ENCODE measurements at regions of chr18 and their contacts with region 1.

Region 1: GRCh38 chr18:76398896-76399612 is 96.0 kb downstream of the ZNF516 start:
- H3K4me3 Mint-ChIP-seq: no peak overlapping the region
- H3K27ac Mint-ChIP-seq: no peak overlapping the region
- H3K4me1 Mint-ChIP-seq: peaks cover 72% of the 10 kb centered on the region
- H3K27me3 Mint-ChIP-seq: no peaks in the 10 kb centered on the region

Region 2: DNA sequence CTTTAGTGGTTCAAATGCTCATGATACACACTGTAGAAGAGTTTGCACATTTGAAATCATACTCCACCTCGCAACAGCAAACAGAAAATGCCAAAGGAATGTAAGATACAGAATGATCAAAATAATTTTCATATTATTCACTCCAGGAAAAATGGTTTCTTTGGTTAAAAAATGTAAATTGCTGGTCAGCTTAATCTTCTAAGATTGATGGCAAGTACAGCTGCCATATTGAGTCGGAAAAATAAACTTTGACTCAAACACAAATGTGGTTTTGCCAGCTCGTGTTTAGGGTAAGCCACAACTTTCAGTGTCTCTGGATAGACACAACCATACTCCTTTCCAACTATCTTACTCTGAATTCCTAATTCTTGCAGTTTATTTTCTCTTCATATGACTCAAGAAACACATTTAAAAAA is 816.6 kb before region 1 on chr18:
- intact Hi-C with region 1: no loop called
- H3K4me3 Mint-ChIP-seq: no peak overlapping the region
- H3K27ac Mint-ChIP-seq: no peak overlapping the region
- H3K4me1 Mint-ChIP-seq: no peaks in the 10 kb centered on the region
- H3K27me3 Mint-ChIP-seq: no peaks in the 10 kb centered on the region

Region 3: GRCh38 chr18:76450452-76451395 is 51.7 kb after region 1 on chr18:
- intact Hi-C with region 1: no loop called
- H3K4me3 Mint-ChIP-seq: peak overlapping the region; percentile 73
- H3K27ac Mint-ChIP-seq: peak overlapping the region; percentile 75
- H3K4me1 Mint-ChIP-seq: peaks cover 98% of the 10 kb centered on the region
- H3K27me3 Mint-ChIP-seq: no peaks in the 10 kb centered on the region

Region 4: GRCh38 chr18:76476665-76477561 is 77.9 kb after region 1 on chr18:
- intact Hi-C with region 1: loop called (anchors 5 kb)
- H3K4me3 Mint-ChIP-seq: peak overlapping the region; percentile 32
- H3K27ac Mint-ChIP-seq: peak overlapping the region; percentile 78
- H3K4me1 Mint-ChIP-seq: peaks cover 91% of the 10 kb centered on the region
- H3K27me3 Mint-ChIP-seq: no peaks in the 10 kb centered on the region

Region 5: DNA sequence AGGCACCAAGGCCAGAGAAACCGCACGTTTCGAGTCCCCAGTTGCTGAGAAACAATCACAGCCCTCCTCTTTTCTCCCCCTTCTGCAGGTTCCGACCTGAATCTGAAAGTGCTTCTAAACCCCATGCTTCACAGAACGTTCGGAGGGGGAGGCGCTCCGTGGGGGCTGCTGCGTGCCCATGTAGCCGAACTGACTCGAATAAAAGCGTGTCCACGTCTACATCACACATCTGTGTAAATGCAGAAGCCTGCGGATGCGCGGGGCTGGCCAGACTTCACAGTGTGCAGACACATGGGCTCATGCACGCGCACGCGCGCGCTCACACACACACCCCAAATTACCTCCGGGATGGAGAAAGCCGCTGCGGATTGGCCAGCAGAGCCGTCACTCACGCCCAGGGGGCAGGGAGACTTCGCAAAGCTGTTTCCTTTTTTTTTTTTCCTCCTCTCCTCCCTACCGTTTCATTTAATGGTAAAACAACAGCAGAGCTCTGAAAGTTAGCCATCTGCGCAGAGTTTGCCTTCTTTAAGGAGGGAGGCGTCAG is 93.7 kb after region 1 on chr18:
- intact Hi-C with region 1: loop called (anchors 5 kb)
- H3K4me3 Mint-ChIP-seq: peak overlapping the region; percentile 93
- H3K27ac Mint-ChIP-seq: peak overlapping the region; percentile 96
- H3K4me1 Mint-ChIP-seq: peaks cover 62% of the 10 kb centered on the region
- H3K27me3 Mint-ChIP-seq: no peaks in the 10 kb centered on the region

Region 6: DNA sequence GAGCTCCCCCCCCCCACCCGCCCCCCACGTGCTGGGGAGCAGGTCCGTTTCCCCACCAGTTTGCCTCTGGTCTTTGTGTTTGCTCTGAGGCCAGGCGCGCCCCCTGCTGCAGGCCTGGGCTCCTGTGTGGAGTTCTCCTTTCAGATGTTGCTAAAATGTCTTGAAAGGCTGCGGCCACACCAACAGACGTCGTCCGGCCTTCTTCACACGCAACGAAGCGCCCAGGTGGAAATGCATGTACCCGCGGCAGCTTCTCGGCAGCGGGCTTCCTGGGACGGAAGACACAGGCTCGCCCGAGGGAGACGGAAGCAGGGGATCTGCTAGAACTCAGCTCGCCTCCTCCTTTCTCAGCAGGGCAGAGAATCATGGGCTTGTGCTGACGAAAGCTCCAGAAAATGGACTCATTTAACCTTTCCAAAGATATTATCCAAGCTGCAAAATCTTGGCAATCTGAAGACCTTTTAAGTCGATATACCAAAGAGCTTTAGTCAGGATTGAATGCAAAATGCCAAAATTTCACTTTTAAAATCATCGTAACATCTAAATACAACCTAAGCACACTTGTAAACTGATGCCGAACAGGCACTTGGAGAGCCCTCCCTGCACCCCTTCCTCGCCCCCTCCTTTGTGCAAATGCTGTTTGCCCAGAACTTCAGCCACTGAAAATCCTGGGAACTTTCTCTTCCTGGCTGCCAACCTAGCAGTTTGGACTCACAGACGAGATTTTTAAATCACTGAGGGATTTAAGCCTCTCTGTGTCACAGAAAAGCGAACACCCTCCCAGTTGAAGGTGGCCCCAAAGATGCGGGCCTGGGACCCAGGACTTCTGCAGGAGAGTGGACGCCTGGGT is 221.5 kb after region 1 on chr18:
- intact Hi-C with region 1: loop called (anchors 2 kb)
- H3K4me3 Mint-ChIP-seq: peak overlapping the region; percentile 78
- H3K27ac Mint-ChIP-seq: peak overlapping the region; percentile 73
- H3K4me1 Mint-ChIP-seq: peaks cover 33% of the 10 kb centered on the region
- H3K27me3 Mint-ChIP-seq: peaks cover 2% of the 10 kb centered on the region

Region 7: GRCh38 chr18:76686737-76687262 is 287.7 kb after region 1 on chr18:
- intact Hi-C with region 1: loop called (anchors 1 kb)
- H3K4me3 Mint-ChIP-seq: no peak overlapping the region
- H3K27ac Mint-ChIP-seq: peak overlapping the region; percentile 11
- H3K4me1 Mint-ChIP-seq: peaks cover 27% of the 10 kb centered on the region
- H3K27me3 Mint-ChIP-seq: peaks cover 25% of the 10 kb centered on the region

Region 8: DNA sequence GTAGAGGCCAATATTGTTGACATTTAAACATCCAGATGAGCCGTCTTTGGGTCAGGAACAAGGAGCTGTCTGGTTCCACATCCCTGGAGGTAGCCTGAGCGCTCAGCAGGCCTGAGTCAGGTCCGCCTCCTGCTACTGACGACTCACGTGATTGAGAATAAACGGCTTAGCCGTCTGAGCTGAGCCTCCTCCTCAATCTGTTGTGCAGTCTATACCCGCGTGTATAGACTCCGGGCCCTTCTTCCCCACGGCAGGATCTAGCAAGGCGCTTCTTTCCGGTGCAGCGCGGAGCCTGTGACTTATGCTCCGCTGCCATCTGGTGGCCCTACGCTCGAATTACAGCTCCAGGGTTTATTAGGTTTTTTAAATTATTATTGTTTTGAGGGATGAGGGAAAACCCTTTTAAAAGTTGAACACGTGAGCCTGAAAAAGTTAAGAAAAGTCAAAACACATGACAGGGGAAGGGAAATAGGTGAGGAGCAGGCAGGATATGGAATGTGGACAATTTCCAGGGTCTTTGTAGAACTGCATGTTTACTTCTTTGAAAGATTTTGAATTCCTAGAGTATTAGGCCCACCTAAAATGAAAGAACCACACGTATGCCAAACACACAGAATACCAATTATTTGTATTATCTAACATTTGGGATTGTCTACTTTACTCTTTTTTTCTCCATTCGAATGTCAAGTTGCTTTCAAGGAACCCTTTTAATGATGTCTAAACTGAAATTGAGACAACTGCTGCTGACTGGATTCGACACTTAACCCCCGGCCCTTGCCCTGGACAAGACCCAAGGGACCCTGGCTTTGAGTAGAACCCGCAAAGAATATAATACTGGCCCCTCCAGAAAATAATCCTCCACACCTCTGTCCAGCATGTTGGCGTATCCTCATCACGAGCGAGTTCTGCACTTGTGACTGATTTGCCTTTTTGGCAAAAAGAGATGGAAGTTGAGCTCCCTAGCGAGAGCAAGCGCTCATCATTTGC is 310.9 kb after region 1 on chr18:
- intact Hi-C with region 1: loop called (anchors 1 kb)
- H3K4me3 Mint-ChIP-seq: no peak overlapping the region
- H3K27ac Mint-ChIP-seq: no peak overlapping the region
- H3K4me1 Mint-ChIP-seq: peaks cover 18% of the 10 kb centered on the region
- H3K27me3 Mint-ChIP-seq: peaks cover 1% of the 10 kb centered on the region